Breast epithelium (tissue), 4 donors: ENCODE measurements at regions of chr5 and their contacts with region 1.

Region 1: DNA sequence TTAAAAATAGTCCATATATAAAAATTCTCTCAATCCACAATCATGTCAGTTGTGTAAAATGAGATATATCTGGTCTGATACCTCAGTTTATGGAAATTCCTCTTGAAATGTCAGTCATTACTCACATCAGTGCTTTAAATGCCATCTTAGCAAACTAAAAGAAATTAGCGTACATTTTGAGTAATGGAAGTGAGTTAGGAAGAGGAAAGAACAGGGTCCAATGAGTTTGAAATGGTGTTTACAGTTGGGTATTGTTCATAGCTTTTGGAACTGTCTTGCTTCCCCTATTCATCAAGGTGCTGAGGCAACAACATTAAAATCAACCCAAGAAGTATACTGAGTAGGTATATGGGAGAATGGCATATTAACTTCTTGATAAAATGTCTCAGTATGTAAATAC is 8.7 kb upstream of the MTX3 start:
- DNase-seq: no peak
- H3K4me3 ChIP-seq: no peak overlapping the region
- H3K27ac ChIP-seq: no peak overlapping the region
- H3K4me1 ChIP-seq: no peaks in the 10 kb centered on the region
- H3K27me3 ChIP-seq: no peaks in the 10 kb centered on the region
- CTCF ChIP-seq: no peak
- POLR2A ChIP-seq: no peak

Region 2: DNA sequence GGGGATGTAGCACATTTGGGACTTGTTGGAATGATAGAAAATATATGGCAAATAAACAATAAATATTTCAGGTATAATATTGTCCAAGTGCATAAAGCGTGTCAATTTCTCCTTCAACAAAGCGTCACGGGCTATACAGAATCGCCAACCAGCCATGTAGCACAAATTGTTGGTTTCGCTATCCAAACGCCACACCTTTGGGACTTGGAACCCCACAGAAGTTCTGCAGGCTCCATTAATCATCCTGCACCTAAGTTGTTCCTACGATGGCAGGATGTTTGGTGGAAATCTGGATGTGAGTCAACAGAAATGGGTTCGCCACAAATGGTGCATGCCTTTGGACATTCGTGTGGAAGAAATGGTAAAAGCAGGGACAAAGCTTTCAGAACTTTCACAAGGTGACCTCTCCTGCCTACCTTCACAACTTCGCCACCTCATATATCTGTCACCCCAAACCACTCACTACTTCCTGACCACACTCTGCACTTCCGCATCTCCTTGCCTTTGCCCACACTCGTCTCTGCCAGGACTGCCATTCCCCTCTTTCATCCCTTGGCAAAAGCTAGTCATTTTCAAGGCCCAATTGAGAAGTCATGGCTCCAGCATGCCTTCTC is 1446.9 kb before region 1 on chr5:
- intact Hi-C with region 1: no loop called
- DNase-seq: no peak
- H3K4me3 ChIP-seq: no peak overlapping the region
- H3K27ac ChIP-seq: peak overlapping the region in 1 of 2 donors; percentile 14
- H3K4me1 ChIP-seq: no peaks in the 10 kb centered on the region
- H3K27me3 ChIP-seq: no peaks in the 10 kb centered on the region
- CTCF ChIP-seq: no peak
- POLR2A ChIP-seq: no peak

Region 3: DNA sequence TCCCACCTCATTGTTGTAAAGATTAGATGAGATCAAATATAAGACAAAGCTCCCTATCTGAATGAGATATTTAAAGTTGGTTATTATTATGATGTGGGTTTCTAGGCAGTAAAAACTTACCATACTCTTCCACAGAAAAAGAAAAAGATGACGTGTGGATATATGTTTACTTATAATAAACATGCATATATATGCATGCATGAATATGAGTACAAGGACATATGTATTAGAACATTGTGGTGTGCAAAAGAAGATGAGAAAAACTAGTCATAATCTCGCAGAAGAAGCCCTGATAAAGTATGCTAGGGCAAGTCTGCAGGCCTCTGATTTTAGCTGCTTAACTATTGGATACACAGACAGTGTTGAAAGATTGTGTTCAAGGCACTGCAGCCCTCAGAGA is 25.3 kb after region 1 on chr5:
- intact Hi-C with region 1: no loop called
- DNase-seq: no peak
- H3K4me3 ChIP-seq: no peak overlapping the region
- H3K27ac ChIP-seq: no peak overlapping the region
- H3K4me1 ChIP-seq: no peaks in the 10 kb centered on the region
- H3K27me3 ChIP-seq: no peaks in the 10 kb centered on the region
- CTCF ChIP-seq: no peak
- POLR2A ChIP-seq: no peak

Region 4: GRCh38 chr5:80204808-80205614 is 205.3 kb after region 1 on chr5:
- intact Hi-C with region 1: loop called (anchors 5 kb)
- DNase-seq: no peak
- H3K4me3 ChIP-seq: no peak overlapping the region
- H3K27ac ChIP-seq: no peak overlapping the region
- H3K4me1 ChIP-seq: no peaks in the 10 kb centered on the region
- H3K27me3 ChIP-seq: no peaks in the 10 kb centered on the region
- CTCF ChIP-seq: no peak
- POLR2A ChIP-seq: no peak